WTC11 (cell line): ENCODE measurements at regions of chr13 and their contacts with region 1.

Region 1: DNA sequence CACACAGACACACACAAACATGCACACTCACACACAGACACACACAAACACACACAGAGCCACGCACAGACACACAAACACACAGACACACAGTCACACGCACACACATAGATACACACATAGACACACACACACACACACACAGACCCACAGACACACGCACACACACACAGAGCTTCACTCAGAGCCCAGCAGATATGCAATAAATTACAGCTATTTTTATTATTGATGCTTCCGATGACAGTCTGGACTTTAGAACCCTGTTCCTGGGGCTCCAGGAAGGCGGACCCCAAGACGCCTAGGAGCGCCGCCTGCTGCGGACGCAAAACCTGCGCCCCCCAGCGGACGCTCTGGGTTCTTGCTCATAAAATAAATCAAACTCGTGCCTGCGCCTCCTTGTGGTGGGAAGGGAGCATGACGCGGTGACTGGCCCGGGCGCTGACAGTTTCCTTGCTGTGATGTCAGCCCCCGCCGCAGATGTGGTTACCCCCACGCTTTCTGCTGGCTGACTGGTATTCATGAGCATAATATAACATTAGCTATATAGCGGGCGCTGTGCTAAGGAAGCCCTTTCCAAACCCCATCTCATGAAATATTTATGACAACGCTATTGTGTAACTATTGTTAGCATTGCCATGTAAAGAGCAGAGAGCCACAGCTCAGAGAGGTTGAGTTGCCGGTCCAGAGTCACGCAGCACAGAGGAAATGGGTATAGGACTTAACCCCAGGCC is 64.4 kb upstream of the TM9SF2 start:
- DNase-seq: peak; percentile 88
- ATAC-seq: peak; percentile 52
- H3K4me3 Mint-ChIP-seq: no peak overlapping the region
- H3K27ac Mint-ChIP-seq: no peak overlapping the region
- H3K4me1 Mint-ChIP-seq: peaks cover 34% of the 10 kb centered on the region
- H3K27me3 Mint-ChIP-seq: no peaks in the 10 kb centered on the region
- CTCF ChIP-seq: peak; percentile 100

Region 2: DNA sequence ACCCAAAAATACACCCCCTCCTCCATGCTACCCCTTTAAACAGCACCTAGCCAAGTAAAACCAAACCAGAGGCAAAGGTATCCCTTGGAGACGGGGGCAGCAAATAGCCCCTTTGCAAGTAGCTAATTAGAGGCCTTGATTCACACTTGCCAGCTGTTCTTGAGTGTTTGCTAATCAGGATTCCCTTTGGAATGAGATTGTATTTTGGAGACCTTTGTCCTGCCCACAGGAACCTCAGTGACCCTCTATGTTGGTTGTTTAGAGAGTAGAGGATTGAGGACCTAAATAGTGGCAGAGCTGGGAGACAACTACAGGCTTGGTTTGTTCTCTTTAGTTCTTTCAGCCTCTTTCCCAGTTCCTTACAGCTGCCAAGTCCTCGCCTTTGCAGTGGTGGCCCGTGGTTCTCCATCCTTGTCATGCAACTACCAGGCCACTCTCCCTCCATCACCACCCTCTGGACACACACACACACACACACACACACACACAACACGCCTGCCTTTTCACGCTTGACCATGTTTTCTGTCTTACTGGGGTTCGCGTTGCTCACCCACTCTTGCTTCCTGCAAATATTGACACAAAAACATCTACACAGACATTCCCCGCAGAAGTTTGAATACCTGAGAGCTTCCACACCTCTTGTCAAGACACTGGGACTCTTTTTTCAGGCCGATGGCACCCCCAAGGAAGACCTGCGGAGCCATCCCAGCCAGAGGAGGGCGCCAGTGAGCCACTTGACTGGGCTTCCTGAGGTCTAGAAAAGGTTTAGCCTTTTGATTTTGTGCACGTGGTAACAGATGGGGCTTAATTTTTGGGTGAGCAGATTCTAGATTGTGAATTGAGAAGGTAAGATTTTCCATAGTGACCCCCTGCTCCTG is 49.7 kb before region 1 on chr13:
- CTCF ChIA-PET with region 1: interaction called, 14 read pairs
- POLR2A ChIA-PET with region 1: no interaction called
- DNase-seq: peak; percentile 90
- ATAC-seq: peak; percentile 72
- H3K4me3 Mint-ChIP-seq: no peak overlapping the region
- H3K27ac Mint-ChIP-seq: no peak overlapping the region; the same call in 1 of the 2 replicates
- H3K4me1 Mint-ChIP-seq: peaks cover 20% of the 10 kb centered on the region
- H3K27me3 Mint-ChIP-seq: no peaks in the 10 kb centered on the region
- CTCF ChIP-seq: peak; percentile 87

Region 3: GRCh38 chr13:99417201-99418102 is 19.4 kb before region 1 on chr13:
- CTCF ChIA-PET with region 1: interaction called, 11 read pairs
- POLR2A ChIA-PET with region 1: no interaction called
- DNase-seq: peak; percentile 38
- ATAC-seq: peak; percentile 54
- H3K4me3 Mint-ChIP-seq: peak overlapping the region; percentile 20; the same call in 1 of the 2 replicates
- H3K27ac Mint-ChIP-seq: no peak overlapping the region
- H3K4me1 Mint-ChIP-seq: peaks cover 14% of the 10 kb centered on the region
- H3K27me3 Mint-ChIP-seq: no peaks in the 10 kb centered on the region; the same call in 1 of the 2 replicates
- CTCF ChIP-seq: no peak

Region 4: GRCh38 chr13:99454518-99455183 is 17.8 kb after region 1 on chr13:
- CTCF ChIA-PET with region 1: no interaction called
- POLR2A ChIA-PET with region 1: no interaction called
- DNase-seq: no peak
- ATAC-seq: no peak
- H3K4me3 Mint-ChIP-seq: no peak overlapping the region
- H3K27ac Mint-ChIP-seq: no peak overlapping the region
- H3K4me1 Mint-ChIP-seq: 0 out of 2 replicates have a peak, but pooled peaks cover 3% of the 10 kb centered on the region
- H3K27me3 Mint-ChIP-seq: no peaks in the 10 kb centered on the region; the same call in 1 of the 2 replicates
- CTCF ChIP-seq: no peak